Vagina (tissue), 2 donors: ENCODE measurements at regions of chr2 and their contacts with region 1.

Region 1: GRCh38 chr2:10072656-10073480 is 7.3 kb downstream of the CYS1 start:
- DNase-seq: no peak
- H3K4me3 ChIP-seq: no peak overlapping the region
- H3K27ac ChIP-seq: no peak overlapping the region
- H3K4me1 ChIP-seq: no peaks in the 10 kb centered on the region
- H3K27me3 ChIP-seq: no peaks in the 10 kb centered on the region
- CTCF ChIP-seq: peak; percentile 79 to 90 (median 81)
- POLR2A ChIP-seq: no peak

Region 2: GRCh38 chr2:10419553-10420257 is 346.8 kb after region 1 on chr2:
- intact Hi-C with region 1: loop called (anchors 2 kb)
- DNase-seq: no peak
- H3K4me3 ChIP-seq: no peak overlapping the region
- H3K27ac ChIP-seq: no peak overlapping the region
- H3K4me1 ChIP-seq: peaks cover 5% of the 10 kb centered on the region
- H3K27me3 ChIP-seq: no peaks in the 10 kb centered on the region
- CTCF ChIP-seq: no peak
- POLR2A ChIP-seq: no peak